AG04450 (cell line): ENCODE measurements at regions of chr1 and their contacts with region 1.

Region 1: GRCh38 chr1:15028102-15028501 is 125.4 kb upstream of the TMEM51 start:
- DNase-seq: peak; percentile 24
- H3K4me3 ChIP-seq: no peak overlapping the region
- H3K27ac ChIP-seq: no peak overlapping the region
- H3K27me3 ChIP-seq: no peaks in the 10 kb centered on the region
- CTCF ChIP-seq: no peak

Region 2: DNA sequence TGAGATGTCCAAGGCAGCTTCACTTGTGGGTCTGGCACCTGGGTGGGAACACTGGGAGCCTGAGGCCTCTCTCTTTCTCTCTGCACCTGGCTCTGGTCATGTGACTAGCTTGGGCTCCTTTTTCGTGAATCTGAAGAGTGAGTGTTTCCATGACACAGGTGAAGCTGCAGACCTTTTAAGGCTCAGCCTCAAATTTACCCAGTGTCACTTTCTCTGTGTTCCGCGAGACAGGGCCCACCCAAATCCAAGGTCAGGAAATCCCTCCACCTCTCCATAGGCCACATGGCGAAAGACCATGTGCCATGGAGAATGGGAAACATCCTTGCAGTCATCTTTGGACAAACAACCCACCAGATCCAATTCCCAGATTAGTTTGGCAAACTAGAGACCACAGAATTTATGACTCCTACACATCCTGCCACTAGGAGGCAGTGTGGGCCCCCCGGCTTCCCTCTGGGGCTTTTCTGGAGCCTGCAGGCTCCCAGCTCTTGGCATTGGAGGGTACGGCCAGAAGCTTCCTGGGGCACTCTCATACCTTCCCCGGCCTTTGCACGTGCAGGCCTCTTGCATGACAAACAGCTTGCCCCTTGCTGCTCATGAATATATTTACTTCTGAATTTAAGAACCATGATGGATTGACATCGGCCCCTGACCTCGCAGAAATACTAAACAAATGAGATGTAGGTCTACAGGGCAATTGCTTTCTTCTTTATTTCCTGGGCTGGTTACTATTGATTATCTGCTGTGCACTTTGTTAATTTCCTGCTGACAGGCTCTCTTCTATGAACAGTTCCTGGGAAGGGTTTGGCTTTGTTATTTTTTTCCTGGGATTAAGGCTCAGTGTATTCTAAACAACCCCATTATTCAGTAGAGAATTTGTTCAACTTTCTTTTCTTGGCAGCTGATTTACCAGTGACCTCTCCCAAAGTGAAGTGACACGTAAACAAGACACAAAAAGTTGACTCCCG is 248.9 kb before region 1 on chr1:
- CTCF ChIA-PET with region 1: interaction called, 28 read pairs
- POLR2A ChIA-PET with region 1: no interaction called
- DNase-seq: no peak
- H3K4me3 ChIP-seq: no peak overlapping the region
- H3K27ac ChIP-seq: no peak overlapping the region
- H3K27me3 ChIP-seq: no peaks in the 10 kb centered on the region
- CTCF ChIP-seq: peak; percentile 76

Region 3: DNA sequence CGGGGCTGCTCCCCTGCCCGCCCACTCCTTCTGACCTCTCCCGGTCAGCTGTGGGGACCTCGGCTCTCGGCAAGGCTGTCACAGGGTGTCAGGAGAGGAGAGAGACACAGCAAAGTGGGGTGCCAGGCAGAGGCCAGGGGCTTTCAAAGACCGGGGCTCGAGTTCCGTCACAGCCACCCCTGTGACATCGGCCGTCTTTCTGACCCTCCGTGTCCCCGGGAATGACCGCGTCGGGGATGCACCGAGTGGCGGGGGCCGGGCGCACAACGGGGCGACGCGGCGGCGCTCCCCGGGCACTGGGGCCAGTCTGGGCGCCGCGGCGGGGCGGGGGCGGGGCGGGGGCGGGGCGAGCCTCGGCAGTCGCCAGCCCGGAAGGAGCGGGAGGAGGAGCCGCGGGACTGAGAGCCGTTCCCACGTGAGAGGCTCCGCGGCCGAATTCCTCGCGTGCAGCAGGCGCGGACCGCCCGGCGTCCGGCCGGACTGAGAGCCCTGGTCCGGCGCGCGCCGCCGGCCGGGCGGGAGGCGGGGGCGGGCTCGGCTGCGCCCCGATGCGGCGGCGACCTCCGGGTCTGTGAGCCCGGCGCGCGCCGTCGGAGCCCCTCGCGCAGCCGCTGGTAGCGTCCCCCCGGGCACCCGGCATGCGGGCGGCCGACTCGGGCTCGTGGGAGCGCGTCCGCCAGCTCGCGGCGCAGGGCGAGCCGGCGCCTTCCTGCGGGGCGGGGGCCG is 104.2 kb before region 1 on chr1:
- CTCF ChIA-PET with region 1: interaction called, 27 read pairs
- POLR2A ChIA-PET with region 1: no interaction called
- DNase-seq: no peak
- H3K4me3 ChIP-seq: peak overlapping the region; percentile 68
- H3K27ac ChIP-seq: no peak overlapping the region
- H3K27me3 ChIP-seq: no peaks in the 10 kb centered on the region
- CTCF ChIP-seq: no peak

Region 4: DNA sequence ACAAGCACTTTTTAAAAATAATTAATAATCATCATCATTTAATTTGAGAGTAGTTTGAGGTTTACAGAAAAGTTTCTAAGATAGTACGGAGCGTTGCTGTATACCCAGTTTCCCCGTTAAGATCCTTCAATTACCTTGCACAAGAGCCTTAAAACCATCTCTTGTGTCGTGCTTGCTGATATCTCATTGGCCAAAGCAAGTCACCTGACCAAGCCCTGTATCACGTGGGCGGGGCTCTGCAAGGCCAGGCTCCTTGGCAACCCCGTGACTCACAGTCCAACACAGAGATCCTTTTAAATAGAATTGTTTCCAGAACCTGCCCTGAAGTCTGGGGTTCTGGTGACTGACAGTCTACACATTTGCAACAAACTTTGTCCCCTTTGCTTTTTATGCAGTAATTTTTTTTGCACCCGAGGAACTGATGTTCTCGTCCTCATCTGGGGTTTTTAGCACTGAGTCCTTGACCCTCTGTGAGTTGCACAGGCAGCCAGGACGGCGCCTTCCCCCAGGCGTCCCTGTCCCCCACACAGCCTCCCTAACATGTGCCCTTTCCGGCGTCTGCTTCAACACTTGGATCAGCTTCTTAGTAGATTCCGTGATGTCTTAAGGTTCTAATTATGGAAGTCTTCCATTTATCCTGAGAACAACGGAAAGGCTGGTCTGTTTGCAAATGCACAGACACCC is 57.8 kb before region 1 on chr1:
- CTCF ChIA-PET with region 1: interaction called, 16 read pairs
- POLR2A ChIA-PET with region 1: interaction called, 5 read pairs
- DNase-seq: no peak
- H3K4me3 ChIP-seq: no peak overlapping the region
- H3K27ac ChIP-seq: no peak overlapping the region
- H3K27me3 ChIP-seq: no peaks in the 10 kb centered on the region
- CTCF ChIP-seq: no peak

Region 5: GRCh38 chr1:15008783-15009729 is 19.0 kb before region 1 on chr1:
- CTCF ChIA-PET with region 1: interaction called, 24 read pairs
- POLR2A ChIA-PET with region 1: no interaction called
- DNase-seq: no peak
- H3K4me3 ChIP-seq: no peak overlapping the region
- H3K27ac ChIP-seq: peak overlapping the region; percentile 39
- H3K27me3 ChIP-seq: no peaks in the 10 kb centered on the region
- CTCF ChIP-seq: no peak

Region 6: DNA sequence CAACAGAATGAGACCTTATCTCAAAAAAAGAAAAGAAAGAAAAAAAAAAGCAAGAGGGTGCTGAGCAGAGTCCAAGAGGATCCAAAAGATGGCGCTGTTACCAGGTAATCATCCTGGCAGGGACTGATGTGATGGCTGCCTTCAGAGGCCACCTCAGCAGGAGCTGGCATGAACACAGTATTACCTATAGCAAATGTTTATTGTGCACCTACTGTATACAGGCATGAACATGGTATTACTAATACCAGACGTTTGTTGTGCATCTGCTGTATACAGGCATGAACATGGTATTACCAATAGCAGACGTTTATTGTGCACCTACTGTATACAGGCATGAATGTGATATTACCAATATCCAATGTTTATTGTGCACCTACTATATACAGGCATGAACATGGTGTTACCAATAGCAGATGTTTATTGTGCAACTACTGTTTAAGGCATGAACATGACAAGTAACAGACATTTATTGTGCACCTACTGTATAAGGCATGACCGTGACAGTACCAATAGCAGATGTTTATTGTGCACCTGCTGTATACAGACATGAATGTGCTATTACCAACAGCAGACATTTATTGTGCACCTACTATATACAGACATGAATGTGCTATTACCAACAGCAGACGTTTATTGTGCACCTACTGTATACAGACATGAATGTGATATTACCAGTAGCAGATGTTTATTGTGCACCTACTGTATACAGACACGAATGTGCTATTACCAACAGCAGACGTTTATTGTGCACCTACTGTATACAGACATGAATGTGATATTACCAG is 10.3 kb after region 1 on chr1:
- CTCF ChIA-PET with region 1: interaction called, 20 read pairs
- POLR2A ChIA-PET with region 1: no interaction called
- DNase-seq: no peak
- H3K4me3 ChIP-seq: no peak overlapping the region
- H3K27ac ChIP-seq: no peak overlapping the region
- H3K27me3 ChIP-seq: no peaks in the 10 kb centered on the region
- CTCF ChIP-seq: peak; percentile 41

Region 7: GRCh38 chr1:15158506-15159165 is 130.5 kb after region 1 on chr1:
- CTCF ChIA-PET with region 1: no interaction called
- POLR2A ChIA-PET with region 1: no interaction called
- DNase-seq: peak; percentile 83
- H3K4me3 ChIP-seq: peak overlapping the region; percentile 32
- H3K27ac ChIP-seq: peak overlapping the region; percentile 81
- H3K27me3 ChIP-seq: no peaks in the 10 kb centered on the region
- CTCF ChIP-seq: no peak

Region 8: DNA sequence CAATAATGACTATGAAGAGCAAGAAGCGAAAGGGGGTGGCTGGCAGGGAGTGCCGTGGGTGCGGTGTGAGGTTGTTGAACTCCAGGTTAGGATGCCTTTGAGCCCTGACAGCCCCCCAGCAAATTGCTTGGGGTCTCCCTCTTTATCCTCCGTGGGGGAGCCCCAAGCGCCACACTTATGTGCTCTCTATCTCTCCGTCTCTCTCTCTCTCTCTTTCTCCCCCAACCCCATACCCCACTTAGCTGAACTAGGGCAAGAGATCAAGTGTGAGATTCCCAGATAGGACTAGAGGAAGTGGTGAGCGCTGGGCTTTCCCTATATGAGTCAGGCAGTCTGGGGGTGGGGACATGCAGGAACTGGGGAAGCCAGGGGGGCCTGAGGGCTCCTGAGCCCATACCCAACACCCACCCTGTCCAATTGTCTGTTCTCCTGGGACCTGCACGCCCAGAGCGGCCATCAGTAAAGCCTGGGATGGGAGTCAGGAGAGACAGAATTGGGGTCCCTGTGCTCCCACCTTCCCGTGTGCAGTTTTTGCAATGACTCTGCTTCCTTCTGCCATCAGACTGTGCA is 389.3 kb after region 1 on chr1:
- CTCF ChIA-PET with region 1: no interaction called
- POLR2A ChIA-PET with region 1: no interaction called
- DNase-seq: no peak
- H3K4me3 ChIP-seq: no peak overlapping the region
- H3K27ac ChIP-seq: peak overlapping the region; percentile 61
- H3K27me3 ChIP-seq: no peaks in the 10 kb centered on the region
- CTCF ChIP-seq: no peak